GM12878 (cell line): ENCODE measurements at regions of chr2 and their contacts with region 1.

Region 1: DNA sequence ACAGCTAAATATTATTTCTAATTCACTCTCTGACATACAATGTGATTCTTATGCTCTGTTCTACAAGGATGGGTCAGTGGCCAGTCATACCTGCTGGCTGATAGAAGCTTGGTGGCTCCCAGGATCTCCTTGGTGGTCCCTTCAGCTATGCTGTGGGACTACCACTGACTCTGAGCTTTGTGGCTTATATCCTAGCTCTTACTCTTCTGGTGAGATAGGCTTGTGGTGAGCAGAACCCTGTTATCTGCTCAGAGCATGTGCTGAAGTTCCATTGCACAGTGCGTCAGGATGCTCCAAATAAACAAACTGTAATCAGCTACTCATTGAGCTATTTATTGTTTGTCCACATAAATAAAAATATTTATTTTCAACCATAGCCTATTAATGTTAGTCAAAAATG is 51.7 kb downstream of the MFSD6 start:
- DNase-seq: no peak
- ATAC-seq: no peak
- H3K4me3 ChIP-seq: no peak overlapping the region
- H3K27ac ChIP-seq: no peak overlapping the region
- H3K4me1 ChIP-seq: peaks cover 11% of the 10 kb centered on the region
- H3K27me3 ChIP-seq: no peaks in the 10 kb centered on the region
- CTCF ChIP-seq: no peak
- EP300 ChIP-seq: no peak
- POLR2A ChIP-seq: no peak
- RAD21 ChIP-seq: no peak

Region 2: GRCh38 chr2:190415794-190416775 is 43.8 kb before region 1 on chr2:
- CTCF ChIA-PET with region 1: interaction called, 3 read pairs
- POLR2A ChIA-PET with region 1: no interaction called
- RAD21 ChIA-PET with region 1: no interaction called
- SMC1A ChIA-PET with region 1: interaction called, 21 read pairs
- in situ Hi-C with region 1: no loop called
- intact Hi-C with region 1: no loop called
- DNase-seq: no peak
- ATAC-seq: peak; percentile 55
- H3K4me3 ChIP-seq: no peak overlapping the region
- H3K27ac ChIP-seq: peak overlapping the region; percentile 71
- H3K4me1 ChIP-seq: peaks cover 13% of the 10 kb centered on the region
- H3K27me3 ChIP-seq: no peaks in the 10 kb centered on the region
- CTCF ChIP-seq: no peak
- EP300 ChIP-seq: no peak
- POLR2A ChIP-seq: no peak
- RAD21 ChIP-seq: no peak